Posterior vena cava (tissue), 2 donors: ENCODE measurements at regions of chr6 and their contacts with region 1.

Region 1: DNA sequence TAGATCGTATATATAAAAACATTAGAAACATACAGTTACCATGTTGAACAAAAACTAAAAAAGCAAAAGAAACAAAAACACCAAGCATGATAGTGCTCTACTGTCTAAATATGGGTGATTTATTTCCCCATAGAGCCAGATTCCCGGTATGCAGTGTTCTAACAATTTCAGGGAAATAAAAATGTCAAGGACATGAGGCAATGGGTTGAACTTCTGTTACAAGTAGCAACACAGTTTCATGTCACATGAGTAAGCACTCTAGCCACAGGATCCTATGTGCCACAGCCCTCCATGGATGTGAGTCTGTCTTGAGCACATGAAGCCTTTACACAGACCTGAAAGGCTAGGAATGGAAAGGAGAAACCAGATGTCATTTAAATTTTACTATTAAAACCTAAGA is 96.0 kb downstream of the MAP3K5 start:
- DNase-seq: no peak

Region 2: GRCh38 chr6:136772685-136773472 is 76.6 kb after region 1 on chr6:
- intact Hi-C with region 1: no loop called
- DNase-seq: no peak

Region 3: DNA sequence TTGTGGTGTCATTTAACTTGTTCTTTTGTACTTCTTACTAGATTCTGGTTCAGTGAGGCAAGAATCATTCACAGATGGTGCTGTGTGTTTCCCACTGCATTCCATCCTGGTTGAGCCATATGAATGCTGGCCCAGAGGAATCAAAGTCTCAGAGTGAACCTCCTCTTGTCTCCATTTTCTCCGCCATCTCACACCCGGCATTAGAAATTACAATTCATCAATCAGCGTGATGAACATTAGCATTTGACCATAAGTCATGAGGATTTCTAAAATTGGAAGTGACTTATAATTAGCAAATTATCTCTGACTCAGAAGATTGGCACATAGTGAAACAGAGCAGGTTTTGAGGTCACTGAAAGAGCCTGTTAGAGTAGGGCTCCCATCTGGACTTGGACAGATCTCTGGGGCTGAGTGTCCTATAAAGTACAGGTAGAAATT is 1196.1 kb after region 1 on chr6:
- intact Hi-C with region 1: loop called in 1 of 2 experiments (anchors 5 kb)
- DNase-seq: no peak